Endothelial cell of umbilical vein (primary cell): ENCODE measurements at regions of chr3 and their contacts with region 1.

Region 1: GRCh38 chr3:107064445-107065060 is 312.7 kb upstream of the CCDC54 start:
- DNase-seq: peak; percentile 83
- H3K4me3 ChIP-seq: no peak overlapping the region
- H3K27ac ChIP-seq: no peak overlapping the region
- H3K4me1 ChIP-seq: peaks cover 14% of the 10 kb centered on the region
- H3K27me3 ChIP-seq: no peaks in the 10 kb centered on the region
- CTCF ChIP-seq: peak; percentile 63 to 68
- POLR2A ChIP-seq: no peak

Region 2: GRCh38 chr3:105686278-105686897 is 1378.2 kb before region 1 on chr3:
- CTCF ChIA-PET with region 1: interaction called, 8 read pairs
- POLR2A ChIA-PET with region 1: no interaction called
- dilution Hi-C with region 1: no loop called
- intact Hi-C with region 1: loop called (anchors 1 kb)
- DNase-seq: peak; percentile 24
- H3K4me3 ChIP-seq: no peak overlapping the region
- H3K27ac ChIP-seq: no peak overlapping the region
- H3K4me1 ChIP-seq: no peaks in the 10 kb centered on the region
- H3K27me3 ChIP-seq: no peaks in the 10 kb centered on the region
- CTCF ChIP-seq: peak; percentile 58
- POLR2A ChIP-seq: no peak

Region 3: DNA sequence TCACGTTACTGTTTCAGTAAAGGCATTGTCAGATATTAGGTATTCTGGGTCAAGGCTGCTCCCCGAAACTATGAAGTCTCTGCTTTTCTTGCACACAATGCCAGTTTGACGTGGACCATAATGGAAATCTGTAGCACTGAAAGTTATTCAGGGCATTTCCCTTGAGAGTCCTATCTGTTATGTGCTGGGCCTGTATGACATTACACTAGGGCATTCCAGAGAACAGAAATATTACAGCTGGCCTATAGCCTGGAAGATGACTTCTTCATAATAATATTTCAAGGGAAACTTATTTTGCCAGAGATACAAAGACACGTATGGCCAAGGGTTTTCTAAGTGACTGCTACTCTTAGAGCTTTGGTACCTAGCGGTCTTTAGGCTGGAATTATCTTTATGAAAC is 582.1 kb before region 1 on chr3:
- CTCF ChIA-PET with region 1: no interaction called
- POLR2A ChIA-PET with region 1: no interaction called
- dilution Hi-C with region 1: no loop called
- intact Hi-C with region 1: loop called (anchors 5 kb)
- DNase-seq: no peak
- H3K4me3 ChIP-seq: no peak overlapping the region
- H3K27ac ChIP-seq: no peak overlapping the region
- H3K4me1 ChIP-seq: no peaks in the 10 kb centered on the region
- H3K27me3 ChIP-seq: no peaks in the 10 kb centered on the region
- CTCF ChIP-seq: no peak
- POLR2A ChIP-seq: no peak

Region 4: GRCh38 chr3:106616556-106616955 is 448.0 kb before region 1 on chr3:
- CTCF ChIA-PET with region 1: interaction called, 38 read pairs
- POLR2A ChIA-PET with region 1: no interaction called
- dilution Hi-C with region 1: no loop called
- intact Hi-C with region 1: no loop called
- DNase-seq: no peak
- H3K4me3 ChIP-seq: no peak overlapping the region
- H3K27ac ChIP-seq: no peak overlapping the region
- H3K4me1 ChIP-seq: peaks cover 2% of the 10 kb centered on the region
- H3K27me3 ChIP-seq: no peaks in the 10 kb centered on the region
- CTCF ChIP-seq: no peak
- POLR2A ChIP-seq: no peak

Region 5: GRCh38 chr3:106728315-106729098 is 336.0 kb before region 1 on chr3:
- CTCF ChIA-PET with region 1: no interaction called
- POLR2A ChIA-PET with region 1: no interaction called
- dilution Hi-C with region 1: no loop called
- intact Hi-C with region 1: loop called (anchors 5 kb)
- DNase-seq: peak; percentile 96
- H3K4me3 ChIP-seq: peak overlapping the region in 1 of 3 experiments; percentile 41
- H3K27ac ChIP-seq: peak overlapping the region; percentile 96
- H3K4me1 ChIP-seq: peaks cover 45% of the 10 kb centered on the region
- H3K27me3 ChIP-seq: no peaks in the 10 kb centered on the region
- CTCF ChIP-seq: no peak
- POLR2A ChIP-seq: no peak

Region 6: DNA sequence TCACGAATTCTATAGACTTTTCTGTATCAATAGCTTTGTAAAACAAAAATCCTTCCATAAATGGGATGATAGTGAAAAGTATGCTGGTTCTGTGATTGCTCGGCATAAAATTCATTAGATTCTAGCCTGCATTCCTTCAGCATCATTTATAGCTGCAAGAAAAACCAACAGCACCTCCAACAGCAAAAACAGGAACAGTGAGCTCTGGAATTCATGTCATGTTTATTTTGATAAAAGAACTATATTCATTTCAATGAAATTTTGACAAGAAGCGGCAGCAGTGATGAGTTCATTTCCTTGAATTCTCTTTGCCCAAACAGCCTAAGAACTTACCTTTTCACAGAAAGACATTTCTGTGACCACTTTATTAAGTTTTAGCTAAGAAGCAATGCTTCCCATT is 202.5 kb before region 1 on chr3:
- CTCF ChIA-PET with region 1: interaction called, 18 read pairs
- POLR2A ChIA-PET with region 1: no interaction called
- dilution Hi-C with region 1: no loop called
- intact Hi-C with region 1: loop called (anchors 2 kb)
- DNase-seq: peak; percentile 79
- H3K4me3 ChIP-seq: no peak overlapping the region
- H3K27ac ChIP-seq: peak overlapping the region; percentile 2
- H3K4me1 ChIP-seq: peaks cover 13% of the 10 kb centered on the region
- H3K27me3 ChIP-seq: no peaks in the 10 kb centered on the region
- CTCF ChIP-seq: peak; percentile 29 to 41
- POLR2A ChIP-seq: no peak

Region 7: GRCh38 chr3:107077391-107077790 is 12.8 kb after region 1 on chr3:
- CTCF ChIA-PET with region 1: interaction called, 15 read pairs
- POLR2A ChIA-PET with region 1: no interaction called
- dilution Hi-C with region 1: no loop called
- intact Hi-C with region 1: no loop called
- DNase-seq: no peak
- H3K4me3 ChIP-seq: no peak overlapping the region
- H3K27ac ChIP-seq: no peak overlapping the region
- H3K4me1 ChIP-seq: no peaks in the 10 kb centered on the region
- H3K27me3 ChIP-seq: no peaks in the 10 kb centered on the region
- CTCF ChIP-seq: no peak
- POLR2A ChIP-seq: no peak

Region 8: DNA sequence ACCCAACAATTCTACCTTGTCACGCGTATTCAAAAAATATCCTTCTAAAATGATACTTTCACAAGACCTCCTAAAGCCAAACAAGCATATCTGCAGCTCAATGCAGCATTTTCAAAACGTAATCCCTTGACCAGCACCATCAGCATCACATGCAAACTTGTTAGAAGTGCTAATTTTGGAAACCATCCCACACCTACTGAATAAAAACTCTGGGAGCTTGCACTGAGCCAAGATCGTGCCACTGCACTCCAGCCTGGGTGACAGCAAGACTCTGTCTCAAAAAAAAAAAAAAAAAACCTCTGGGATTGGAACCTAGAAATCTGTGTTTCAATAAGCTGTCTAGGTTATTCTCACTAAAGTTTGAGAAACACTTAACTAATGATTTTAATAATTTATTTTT is 89.4 kb after region 1 on chr3:
- CTCF ChIA-PET with region 1: no interaction called
- POLR2A ChIA-PET with region 1: no interaction called
- dilution Hi-C with region 1: no loop called
- intact Hi-C with region 1: no loop called
- DNase-seq: no peak
- H3K4me3 ChIP-seq: no peak overlapping the region
- H3K27ac ChIP-seq: no peak overlapping the region
- H3K4me1 ChIP-seq: no peaks in the 10 kb centered on the region
- H3K27me3 ChIP-seq: no peaks in the 10 kb centered on the region
- CTCF ChIP-seq: no peak
- POLR2A ChIP-seq: no peak